ENCODE measurements at regions of chr17 and their contacts with region 1.

Region 1: DNA sequence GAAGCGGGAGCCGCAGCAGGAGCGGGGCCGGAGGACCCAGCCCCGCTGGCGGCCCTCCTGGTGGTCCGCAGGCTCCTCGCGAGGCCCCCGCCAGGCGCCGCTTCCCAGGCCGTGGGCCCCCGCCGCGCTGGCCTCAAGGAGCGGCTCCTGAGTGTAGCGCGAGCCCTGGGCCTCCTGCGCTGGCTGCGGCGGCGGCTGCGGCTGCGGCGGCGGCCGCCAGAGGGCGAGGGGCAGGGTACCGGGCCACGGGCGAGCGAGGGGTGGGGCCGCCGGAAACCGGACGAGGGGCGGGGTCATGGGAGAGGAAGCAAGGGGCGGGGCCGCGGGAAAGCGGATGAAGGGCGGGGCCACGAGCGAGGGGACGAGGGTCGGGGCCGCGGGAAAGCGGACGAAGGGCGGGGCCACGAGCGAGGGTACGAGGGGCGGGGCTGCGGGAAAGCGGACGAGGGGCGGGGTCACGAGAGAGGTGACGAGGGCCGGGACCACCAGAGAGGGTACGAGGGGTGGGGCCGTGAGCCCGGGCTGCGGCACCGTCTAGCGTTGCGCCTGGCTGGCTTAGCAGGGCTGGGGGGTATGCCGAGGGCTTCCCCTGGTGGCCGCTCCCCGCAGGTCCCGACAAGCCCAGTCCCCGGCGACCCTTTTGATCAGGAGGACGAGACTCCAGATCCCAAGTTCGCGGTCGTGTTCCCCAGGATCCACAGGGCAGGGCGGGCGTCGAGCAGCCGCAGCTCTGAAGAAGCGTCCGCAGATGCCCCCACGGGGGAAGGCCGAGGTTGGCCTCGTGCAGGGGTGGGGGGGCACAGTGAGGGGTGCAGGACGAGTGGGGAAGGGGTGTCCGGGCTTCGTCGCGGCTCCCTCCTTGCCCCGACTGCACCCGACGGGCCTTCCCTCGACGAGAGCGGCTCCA is 1.7 kb downstream of the MYO15B start:
- DNase-seq: peak; percentile 97
- H3K4me3 ChIP-seq: peak overlapping the region; percentile 62 to 79 (median 68)
- H3K27ac ChIP-seq: peak overlapping the region; percentile 86 to 95 (median 90)
- H3K4me1 ChIP-seq: peaks cover 15 to 37% (median 34%) of the 10 kb centered on the region in 4 donors
- H3K27me3 ChIP-seq: peaks cover 0 to 11% (median 5%) of the 10 kb centered on the region in 4 donors
- CTCF ChIP-seq: peak; percentile 84 to 92 (median 89)
- EP300 ChIP-seq: no peak
- POLR2A ChIP-seq: no peak

Region 2: GRCh38 chr17:75319904-75320691 is 269.2 kb before region 1 on chr17:
- intact Hi-C with region 1: loop called (anchors 10 kb)
- DNase-seq: no peak
- H3K4me3 ChIP-seq: no peak overlapping the region
- H3K27ac ChIP-seq: peak overlapping the region in 1 of 4 donors; percentile 27
- H3K4me1 ChIP-seq: peaks cover 6 to 19% (median 15%) of the 10 kb centered on the region in 4 donors
- H3K27me3 ChIP-seq: no peaks in the 10 kb centered on the region
- CTCF ChIP-seq: no peak
- EP300 ChIP-seq: no peak
- POLR2A ChIP-seq: no peak

Region 3: GRCh38 chr17:75430159-75430974 is 158.9 kb before region 1 on chr17:
- intact Hi-C with region 1: loop called (anchors 2 kb)
- DNase-seq: no peak
- H3K4me3 ChIP-seq: no peak overlapping the region
- H3K27ac ChIP-seq: peak overlapping the region; percentile 80 to 87 (median 82)
- H3K4me1 ChIP-seq: peaks cover 10 to 40% (median 37%) of the 10 kb centered on the region in 4 donors
- H3K27me3 ChIP-seq: no peaks in the 10 kb centered on the region
- CTCF ChIP-seq: peak; percentile 9 to 13 (median 13)
- EP300 ChIP-seq: no peak
- POLR2A ChIP-seq: no peak

Region 4: DNA sequence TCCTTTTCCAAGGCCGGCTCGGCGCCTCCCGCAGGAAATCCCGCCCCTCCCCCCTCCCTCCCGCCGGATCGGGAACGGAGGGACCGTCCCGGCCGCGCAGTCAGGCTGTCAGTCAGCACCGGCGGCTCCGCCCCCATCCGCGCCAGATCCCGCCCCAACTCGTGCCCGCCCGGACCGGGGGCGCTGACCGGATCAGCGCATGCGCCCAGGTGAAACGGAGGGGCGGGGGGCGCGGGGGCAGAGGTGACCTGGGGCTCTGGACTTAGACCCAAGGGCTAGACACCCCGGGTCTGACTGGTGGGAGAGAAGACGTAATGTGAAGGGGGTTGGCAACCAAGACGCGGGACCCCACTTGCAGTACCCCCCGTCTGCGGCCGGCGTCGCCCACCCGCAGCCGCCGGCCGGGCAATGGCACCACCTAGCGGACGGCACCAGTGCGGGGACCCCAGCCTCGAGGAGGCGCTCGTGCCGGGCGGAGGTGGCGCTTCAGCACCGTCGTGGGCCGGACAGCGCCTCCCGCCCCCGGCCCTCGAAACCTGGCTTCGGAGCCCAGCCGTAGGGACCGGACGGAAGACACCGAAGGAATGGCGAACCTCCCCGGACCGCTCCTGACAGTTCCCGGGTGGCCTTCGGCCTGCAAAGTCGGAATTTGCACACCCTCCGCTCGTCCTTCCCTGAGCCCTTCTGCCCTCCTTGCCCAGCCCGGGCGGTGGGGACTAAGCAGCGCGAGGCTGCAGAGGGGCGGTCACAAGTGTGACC is 73.6 kb before region 1 on chr17 and contains the start of gene CASKIN2:
- intact Hi-C with region 1: loop called (anchors 5 kb)
- DNase-seq: peak; percentile 97
- H3K4me3 ChIP-seq: peak within 1 kb of the TSS; percentile 92 to 98 (median 96)
- H3K27ac ChIP-seq: peak within 1 kb of the TSS; percentile 93 to 96 (median 94)
- H3K4me1 ChIP-seq: peaks cover 48 to 70% (median 60%) of the 10 kb centered on the region in 4 donors
- H3K27me3 ChIP-seq: no peaks in the 10 kb centered on the region
- CTCF ChIP-seq: peak; percentile 96 to 97 (median 97)
- EP300 ChIP-seq: no peak
- POLR2A ChIP-seq: no peak
- total RNA-seq, gene CASKIN2: 16.2 to 43.5 (median 35.5) TPM

Region 5: DNA sequence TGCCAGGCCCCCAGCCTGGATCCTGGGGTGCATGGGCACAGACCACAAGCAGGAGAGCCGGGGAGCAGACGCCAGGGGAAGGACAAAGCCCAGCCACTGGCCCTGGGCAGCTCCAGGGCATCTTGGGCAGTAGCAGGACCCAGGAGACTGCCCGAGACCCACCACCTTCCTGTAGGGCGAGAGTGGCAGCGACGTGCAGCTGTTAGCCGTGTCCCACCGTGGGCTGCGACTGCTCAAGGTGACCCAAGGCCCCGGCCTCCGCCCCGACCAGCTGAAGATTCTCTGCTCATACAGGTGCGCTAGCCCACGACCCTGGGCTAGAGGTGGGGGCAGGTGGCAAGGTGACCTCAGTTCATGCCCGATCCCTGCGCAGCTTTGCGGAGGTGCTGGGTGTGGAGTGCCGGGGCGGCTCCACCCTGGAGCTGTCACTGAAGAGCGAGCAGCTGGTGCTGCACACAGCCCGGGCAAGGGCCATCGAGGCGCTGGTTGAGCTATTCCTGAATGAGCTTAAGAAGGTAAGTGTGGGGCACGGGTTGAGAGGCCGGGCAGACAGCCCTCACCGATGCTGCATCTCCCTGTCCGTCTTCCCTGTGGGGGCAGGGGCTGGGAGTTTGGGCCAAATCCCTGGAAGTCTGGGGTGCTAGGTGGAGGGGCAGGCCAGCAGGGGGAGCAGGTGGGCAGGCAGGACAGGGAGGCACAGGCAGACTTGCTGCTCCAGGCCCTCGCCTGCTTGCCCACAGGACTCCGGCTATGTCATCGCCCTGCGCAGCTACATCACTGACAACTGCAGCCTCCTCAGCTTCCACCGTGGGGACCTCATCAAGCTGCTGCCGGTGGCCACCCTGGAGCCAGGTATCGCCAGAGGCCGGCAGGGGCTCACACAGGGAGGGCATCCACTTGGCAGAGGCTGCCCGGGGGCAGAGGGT is 30.5 kb after region 1 on chr17:
- intact Hi-C with region 1: no loop called
- DNase-seq: no peak
- H3K4me3 ChIP-seq: no peak overlapping the region
- H3K27ac ChIP-seq: no peak overlapping the region
- H3K4me1 ChIP-seq: no peaks in the 10 kb centered on the region
- H3K27me3 ChIP-seq: no peaks in the 10 kb centered on the region
- CTCF ChIP-seq: peak; percentile 7 to 27 (median 14)
- EP300 ChIP-seq: no peak
- POLR2A ChIP-seq: no peak

Region 6: DNA sequence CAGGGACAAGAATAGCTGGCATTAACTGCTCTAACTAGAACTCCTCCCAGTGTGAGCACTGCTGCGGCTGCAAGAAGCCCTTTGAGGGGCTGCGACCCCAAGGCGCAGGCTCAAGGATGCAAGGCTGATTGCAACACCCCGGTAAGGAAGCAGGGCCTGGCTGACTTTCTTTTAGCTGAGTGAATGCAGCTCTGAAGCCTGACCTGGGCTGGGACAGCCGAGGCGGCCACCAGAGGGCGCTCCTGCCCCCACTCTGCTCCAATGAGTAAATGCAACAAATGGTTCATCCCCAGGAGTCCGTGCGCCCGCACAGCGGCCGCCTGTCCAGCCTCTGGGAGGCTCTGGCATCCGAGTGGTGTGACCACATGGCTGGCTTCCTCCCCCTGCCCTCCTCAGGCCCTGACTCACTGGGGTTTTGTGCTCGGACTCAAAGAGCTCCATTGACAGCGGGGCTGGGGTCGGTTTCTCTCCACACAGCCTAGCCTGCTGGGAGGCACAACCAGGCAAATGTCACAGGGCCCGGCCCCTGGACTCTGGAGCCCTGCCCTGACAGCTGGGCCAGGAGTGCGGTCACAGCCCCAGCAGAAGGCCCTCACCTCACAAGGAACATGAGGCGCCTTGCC is 43.7 kb after region 1 on chr17 and contains the start of gene SMIM5:
- intact Hi-C with region 1: loop called (anchors 5 kb)
- DNase-seq: peak; percentile 97
- H3K4me3 ChIP-seq: peak within 1 kb of the TSS; percentile 35 to 48 (median 40)
- H3K27ac ChIP-seq: peak within 1 kb of the TSS; percentile 74 to 86 (median 86)
- H3K4me1 ChIP-seq: peaks cover 24 to 31% (median 30%) of the 10 kb centered on the region in 4 donors
- H3K27me3 ChIP-seq: no peaks in the 10 kb centered on the region
- CTCF ChIP-seq: peak in 2 of 3 experiments; percentile 95 to 96
- EP300 ChIP-seq: no peak
- POLR2A ChIP-seq: peak; percentile 2
- total RNA-seq, gene SMIM5: 4.3 to 6.6 (median 5.6) TPM

Measured in esophagus muscularis mucosa (tissue), 4 donors.